ENCODE measurements at regions of chrX and their contacts with region 1.

Region 1: DNA sequence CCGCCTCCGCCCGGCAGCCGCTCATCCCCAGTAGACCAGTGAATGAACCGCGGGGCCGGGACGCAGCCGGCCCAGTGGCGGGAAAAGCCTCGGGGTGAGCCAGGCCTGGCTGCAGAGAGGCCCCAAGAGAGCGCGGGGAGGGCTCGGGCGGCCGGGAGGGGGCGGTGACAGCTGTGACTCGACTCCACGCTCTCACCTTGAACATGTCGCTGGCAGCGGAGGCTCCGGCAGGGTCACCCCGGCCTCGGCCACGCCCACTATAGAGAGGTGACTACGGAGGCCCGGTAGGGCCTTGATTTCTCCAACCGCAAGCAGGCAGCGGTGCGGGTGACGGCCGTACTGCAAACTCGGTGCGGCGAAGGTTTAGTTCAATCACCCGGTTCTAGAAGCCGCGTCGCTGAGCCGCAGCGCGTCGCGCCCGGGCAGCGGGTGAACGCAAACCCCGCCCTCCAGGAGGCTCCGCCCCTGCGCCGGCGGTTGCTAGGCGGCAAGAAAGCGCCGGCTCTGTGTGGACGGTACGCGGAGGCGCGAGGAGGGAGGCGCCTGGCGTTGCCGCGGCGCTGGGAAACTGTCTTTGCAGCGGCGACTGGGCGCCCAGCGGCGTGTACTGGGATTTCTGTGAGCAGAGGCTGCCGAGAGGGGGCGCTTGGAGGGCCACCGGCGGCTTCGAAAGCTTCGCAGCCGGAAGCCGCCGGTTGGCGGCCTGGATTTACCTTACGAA is at the starts of genes APOO and CXorf58:
- DNase-seq: peak; percentile 80 to 94 (median 91)
- ATAC-seq: peak; percentile 95
- H3K4me3 ChIP-seq: peak within 1 kb of the TSS; percentile 62
- H3K4me3 Mint-ChIP-seq: peak within 1 kb of the TSS; percentile 79 to 88 (median 83)
- H3K27ac ChIP-seq: peak within 1 kb of the TSS; percentile 88
- H3K27ac Mint-ChIP-seq: peak within 1 kb of the TSS; percentile 85 to 94 (median 90)
- H3K4me1 ChIP-seq: peaks cover 10 to 16% of the 10 kb centered on the region in 2 donors
- H3K4me1 Mint-ChIP-seq: peaks cover 0 to 17% (median 8%) of the 10 kb centered on the region in 7 donors
- H3K27me3 ChIP-seq: no peaks in the 10 kb centered on the region
- H3K27me3 Mint-ChIP-seq: no peaks in the 10 kb centered on the region
- total RNA-seq, gene APOO: 5.4 to 19.2 (median 7.5) TPM
- total RNA-seq, gene CXorf58: not detected

Region 2: DNA sequence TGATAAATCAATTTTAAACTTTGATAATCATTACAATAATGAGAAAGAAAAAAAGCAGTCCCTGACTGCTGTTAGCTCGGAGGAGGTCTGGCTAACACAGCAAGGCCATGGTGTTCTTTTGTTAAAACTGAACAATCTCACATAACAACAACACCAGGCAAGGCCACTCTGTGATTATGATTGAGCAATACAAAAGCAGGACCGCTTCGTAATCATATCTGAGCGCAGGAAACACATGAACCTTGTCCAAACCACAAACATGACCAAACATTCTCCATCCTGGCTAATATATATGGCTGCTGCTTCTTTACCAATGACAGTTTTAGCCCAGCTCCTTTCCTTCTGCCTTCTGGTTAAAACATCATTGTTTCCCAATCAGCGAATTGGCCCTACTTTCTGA is 984.7 kb before region 1 on chrX:
- CTCF ChIA-PET with region 1: no interaction called
- POLR2A ChIA-PET with region 1: no interaction called
- intact Hi-C with region 1: no loop called
- DNase-seq: no peak
- ATAC-seq: no peak
- H3K4me3 ChIP-seq: no peak overlapping the region
- H3K4me3 Mint-ChIP-seq: no peak overlapping the region
- H3K27ac ChIP-seq: no peak overlapping the region
- H3K27ac Mint-ChIP-seq: no peak overlapping the region
- H3K4me1 ChIP-seq: no peaks in the 10 kb centered on the region
- H3K4me1 Mint-ChIP-seq: no peaks in the 10 kb centered on the region
- H3K27me3 ChIP-seq: no peaks in the 10 kb centered on the region
- H3K27me3 Mint-ChIP-seq: no peaks in the 10 kb centered on the region

Region 3: GRCh38 chrX:23667239-23668177 is 240.2 kb before region 1 on chrX and contains the start of gene PRDX4:
- CTCF ChIA-PET with region 1: interaction called, 3 read pairs
- POLR2A ChIA-PET with region 1: no interaction called
- intact Hi-C with region 1: loop called (anchors 1 to 10 kb)
- DNase-seq: peak; percentile 42 to 79 (median 57)
- ATAC-seq: peak; percentile 96
- H3K4me3 ChIP-seq: peak within 1 kb of the TSS; percentile 73
- H3K4me3 Mint-ChIP-seq: peak within 1 kb of the TSS; percentile 80 to 94 (median 92)
- H3K27ac ChIP-seq: peak within 1 kb of the TSS; percentile 85
- H3K27ac Mint-ChIP-seq: peak within 1 kb of the TSS; percentile 71 to 97 (median 89)
- H3K4me1 ChIP-seq: peaks cover 10 to 12% of the 10 kb centered on the region in 2 donors
- H3K4me1 Mint-ChIP-seq: peaks cover 6 to 29% (median 23%) of the 10 kb centered on the region in 7 donors
- H3K27me3 ChIP-seq: no peaks in the 10 kb centered on the region
- H3K27me3 Mint-ChIP-seq: no peaks in the 10 kb centered on the region
- total RNA-seq, gene PRDX4: 8.0 to 33.3 (median 12.1) TPM

Region 4: DNA sequence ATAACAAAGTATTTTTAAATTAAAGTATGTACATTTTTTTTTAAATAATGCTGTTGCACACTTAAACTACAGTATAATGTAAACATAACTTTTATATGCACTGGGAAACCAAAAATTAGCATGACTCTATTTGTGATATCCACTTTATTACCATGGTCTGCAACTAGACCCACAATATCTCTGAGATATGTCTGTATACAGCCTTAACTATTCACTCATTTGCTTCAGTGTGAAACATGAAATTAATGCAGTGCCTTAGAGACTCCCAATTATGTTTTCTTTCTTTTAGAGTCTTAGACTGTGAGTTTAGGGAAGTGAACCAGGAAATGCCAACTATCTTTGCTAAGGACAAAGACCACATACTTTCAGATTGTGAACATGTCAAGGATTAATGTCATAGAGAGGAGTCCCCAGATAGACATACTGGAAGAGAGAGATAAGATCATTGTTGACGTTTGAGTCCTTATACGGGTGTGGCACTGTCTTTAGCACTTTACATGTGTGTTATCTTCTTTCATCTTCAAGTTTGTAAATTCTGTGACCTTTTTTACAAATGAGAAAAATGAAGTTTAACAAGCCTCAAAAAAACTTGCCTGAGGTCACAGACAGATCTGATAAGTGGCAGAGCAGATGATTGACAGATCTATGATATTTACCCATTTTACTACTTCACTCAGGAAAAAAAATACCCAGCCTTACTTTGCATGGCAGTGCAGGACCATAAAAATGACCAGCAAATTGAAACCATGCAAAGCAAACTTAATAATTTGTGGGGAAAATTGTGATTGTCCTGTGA is 23.4 kb after region 1 on chrX:
- CTCF ChIA-PET with region 1: interaction called, 5 read pairs
- POLR2A ChIA-PET with region 1: interaction called, 5 read pairs
- intact Hi-C with region 1: loop called in 1 of 2 experiments (anchors 1 kb)
- DNase-seq: peak in 7 of 9 donors; percentile 10 to 58 (median 32)
- ATAC-seq: peak; percentile 83
- H3K4me3 ChIP-seq: no peak overlapping the region
- H3K4me3 Mint-ChIP-seq: peak overlapping the region in 9 of 10 donors; percentile 12 to 68 (median 48)
- H3K27ac ChIP-seq: peak overlapping the region; percentile 57
- H3K27ac Mint-ChIP-seq: peak overlapping the region in 8 of 9 donors; percentile 65 to 91 (median 84)
- H3K4me1 ChIP-seq: peaks cover 4 to 10% of the 10 kb centered on the region in 2 donors
- H3K4me1 Mint-ChIP-seq: peaks cover 4 to 21% (median 17%) of the 10 kb centered on the region in 7 donors
- H3K27me3 ChIP-seq: no peaks in the 10 kb centered on the region
- H3K27me3 Mint-ChIP-seq: no peaks in the 10 kb centered on the region

Region 5: DNA sequence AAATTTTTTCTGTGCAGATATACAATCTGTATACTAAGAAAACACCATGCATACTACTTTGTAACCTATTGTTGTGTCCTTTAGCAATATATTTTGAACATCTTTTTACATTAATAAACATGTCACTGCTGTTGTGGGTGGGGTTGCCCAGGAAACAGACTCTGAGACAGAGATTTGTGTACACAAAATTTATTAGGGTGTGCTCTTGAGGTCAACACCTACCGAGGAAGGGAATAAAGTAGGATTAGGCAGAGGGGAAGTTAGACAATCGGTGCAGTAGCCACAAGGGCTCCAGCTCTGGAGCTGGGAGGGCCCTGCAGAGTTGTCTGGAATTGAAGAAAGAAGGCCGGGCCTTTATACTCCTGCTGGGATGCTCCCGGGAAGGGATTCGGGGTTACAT is 56.5 kb after region 1 on chrX:
- CTCF ChIA-PET with region 1: no interaction called
- POLR2A ChIA-PET with region 1: no interaction called
- intact Hi-C with region 1: no loop called
- DNase-seq: no peak
- ATAC-seq: no peak
- H3K4me3 ChIP-seq: no peak overlapping the region
- H3K4me3 Mint-ChIP-seq: no peak overlapping the region
- H3K27ac ChIP-seq: no peak overlapping the region
- H3K27ac Mint-ChIP-seq: no peak overlapping the region
- H3K4me1 ChIP-seq: peaks cover 0 to 5% of the 10 kb centered on the region in 2 donors
- H3K4me1 Mint-ChIP-seq: peaks cover 3 to 13% (median 11%) of the 10 kb centered on the region in 7 donors
- H3K27me3 ChIP-seq: no peaks in the 10 kb centered on the region
- H3K27me3 Mint-ChIP-seq: no peaks in the 10 kb centered on the region

Region 6: DNA sequence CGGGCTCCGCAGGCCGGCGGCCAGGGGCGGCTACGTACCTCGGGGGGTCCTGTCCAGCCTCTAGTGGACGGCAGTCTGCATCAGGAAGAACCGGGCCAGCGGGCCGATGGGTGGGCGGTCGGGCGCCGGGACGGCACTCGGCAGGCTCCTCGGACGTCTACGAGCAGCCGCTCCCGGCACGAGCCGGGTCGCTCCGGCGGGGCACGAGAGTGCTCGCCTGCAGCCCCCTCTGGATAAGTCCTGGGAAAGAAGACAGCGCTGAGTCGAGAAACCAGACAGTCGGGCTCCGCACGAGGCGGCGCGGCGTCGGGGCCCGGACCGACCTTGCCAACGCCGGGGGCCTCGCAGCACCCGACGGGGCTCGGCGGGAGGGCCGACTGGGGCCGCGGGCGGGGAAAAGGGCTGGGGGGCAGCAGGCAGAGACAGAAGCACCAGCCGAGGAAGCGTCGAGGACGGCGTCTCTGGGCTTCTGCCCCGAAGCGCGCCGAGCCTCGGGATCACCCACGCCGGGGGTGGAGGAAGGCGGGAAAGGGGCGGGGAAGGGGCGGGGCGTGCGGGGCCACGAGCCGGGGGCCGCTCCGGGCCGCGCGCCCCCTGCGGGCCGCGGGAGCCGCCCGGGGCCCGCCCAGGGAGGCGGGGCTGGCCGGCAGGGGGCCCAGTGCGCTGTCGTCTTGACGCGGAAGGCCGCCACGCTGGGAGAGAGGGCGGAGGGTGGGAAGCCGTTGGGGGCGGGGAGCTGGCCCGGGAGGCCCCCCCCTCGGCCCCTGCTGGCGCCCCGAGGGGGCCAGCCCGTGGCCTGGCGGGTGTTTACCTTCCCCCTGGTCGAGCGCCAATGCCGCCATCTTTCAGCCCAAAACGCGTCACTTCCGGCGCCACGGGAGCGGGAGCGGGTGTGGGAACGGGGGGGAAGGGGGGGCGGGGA is 117.4 kb after region 1 on chrX:
- CTCF ChIA-PET with region 1: interaction called, 4 read pairs
- POLR2A ChIA-PET with region 1: interaction called, 7 read pairs
- intact Hi-C with region 1: loop called (anchors 1 kb)
- DNase-seq: peak; percentile 68 to 82 (median 76)
- ATAC-seq: peak; percentile 96
- H3K4me3 ChIP-seq: peak overlapping the region; percentile 74
- H3K4me3 Mint-ChIP-seq: peak overlapping the region; percentile 71 to 94 (median 86)
- H3K27ac ChIP-seq: peak overlapping the region; percentile 96
- H3K27ac Mint-ChIP-seq: peak overlapping the region in 7 of 9 donors; percentile 48 to 92 (median 85)
- H3K4me1 ChIP-seq: no peaks in the 10 kb centered on the region
- H3K4me1 Mint-ChIP-seq: peaks cover 7 to 38% (median 27%) of the 10 kb centered on the region in 7 donors
- H3K27me3 ChIP-seq: no peaks in the 10 kb centered on the region
- H3K27me3 Mint-ChIP-seq: peaks cover 0 to 3% (median 0%) of the 10 kb centered on the region in 5 donors

Region 7: GRCh38 chrX:24464836-24465531 is 557.3 kb after region 1 on chrX and contains the start of gene PDK3:
- CTCF ChIA-PET with region 1: no interaction called
- POLR2A ChIA-PET with region 1: no interaction called
- intact Hi-C with region 1: loop called in 1 of 2 experiments (anchors 5 kb)
- DNase-seq: peak; percentile 81 to 92 (median 89)
- ATAC-seq: peak; percentile 98
- H3K4me3 ChIP-seq: peak within 1 kb of the TSS; percentile 70
- H3K4me3 Mint-ChIP-seq: peak within 1 kb of the TSS; percentile 48 to 90 (median 85)
- H3K27ac ChIP-seq: peak within 1 kb of the TSS; percentile 92
- H3K27ac Mint-ChIP-seq: peak within 1 kb of the TSS; percentile 77 to 97 (median 93)
- H3K4me1 ChIP-seq: peaks cover 14 to 24% of the 10 kb centered on the region in 2 donors
- H3K4me1 Mint-ChIP-seq: peaks cover 7 to 37% (median 33%) of the 10 kb centered on the region in 7 donors
- H3K27me3 ChIP-seq: no peaks in the 10 kb centered on the region
- H3K27me3 Mint-ChIP-seq: no peaks in the 10 kb centered on the region
- total RNA-seq, gene PDK3: 17.4 to 29.4 (median 28.5) TPM